Caco-2 (cell line): ENCODE measurements at regions of chr11 and their contacts with region 1.

Region 1: DNA sequence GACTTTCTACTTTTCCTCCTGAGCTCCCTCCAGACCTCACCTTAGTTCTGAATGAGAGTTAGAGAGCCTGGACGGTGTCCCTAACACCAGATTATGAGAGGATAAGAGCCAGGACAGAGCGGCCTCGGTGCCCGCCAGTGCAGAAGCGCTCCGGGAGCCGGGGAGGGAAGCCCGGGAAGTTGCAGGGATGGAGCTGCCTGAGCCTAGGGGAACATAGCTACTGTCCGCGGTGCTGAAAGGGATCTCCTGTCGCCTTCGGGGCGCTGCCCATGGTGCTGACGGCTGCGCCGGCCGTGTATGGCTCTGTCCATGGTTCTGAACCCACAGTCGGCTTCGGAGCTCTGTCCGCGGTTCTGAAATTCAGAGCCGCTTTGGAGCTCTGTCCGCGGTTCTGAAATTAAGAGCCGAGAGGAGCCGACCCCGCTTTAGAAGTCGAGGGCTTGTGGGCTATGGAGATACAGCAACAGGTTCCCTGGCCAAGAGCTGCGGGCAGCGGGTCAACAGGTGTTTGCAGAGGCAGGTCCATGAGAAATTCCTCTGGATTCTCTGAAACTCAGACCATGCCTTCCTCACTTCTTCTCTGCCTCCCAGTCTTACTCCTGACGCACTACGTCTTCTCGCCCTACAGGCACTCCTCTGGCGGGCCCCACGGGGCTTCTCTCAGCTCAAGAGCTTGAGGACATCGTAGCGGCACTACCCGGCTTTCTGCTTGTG is 814 bp downstream of the NPAS4 start:
- DNase-seq: peak; percentile 92 to 96
- H3K4me3 ChIP-seq: no peak overlapping the region
- H3K4me3 Mint-ChIP-seq: no peak overlapping the region
- H3K27ac Mint-ChIP-seq: no peak overlapping the region
- H3K4me1 ChIP-seq: no peaks in the 10 kb centered on the region
- H3K4me1 Mint-ChIP-seq: peaks cover 14% of the 10 kb centered on the region
- H3K27me3 ChIP-seq: no peaks in the 10 kb centered on the region; the same call in 1 of the 2 replicates
- H3K27me3 Mint-ChIP-seq: peaks cover 9% of the 10 kb centered on the region
- CTCF ChIP-seq: no peak

Region 2: GRCh38 chr11:66344550-66345315 is 76.9 kb before region 1 on chr11 and contains the start of gene BRMS1:
- CTCF ChIA-PET with region 1: no interaction called
- POLR2A ChIA-PET with region 1: no interaction called
- intact Hi-C with region 1: no loop called
- DNase-seq: peak; percentile 97 to 98
- H3K4me3 ChIP-seq: peak within 1 kb of the TSS; percentile 99
- H3K4me3 Mint-ChIP-seq: peak within 1 kb of the TSS; percentile 86
- H3K27ac Mint-ChIP-seq: peak within 1 kb of the TSS; percentile 99
- H3K4me1 ChIP-seq: peaks cover 22% of the 10 kb centered on the region
- H3K4me1 Mint-ChIP-seq: peaks cover 34% of the 10 kb centered on the region
- H3K27me3 ChIP-seq: no peaks in the 10 kb centered on the region
- H3K27me3 Mint-ChIP-seq: peaks cover 4% of the 10 kb centered on the region
- CTCF ChIP-seq: peak in 1 of 2 experiments; percentile 19
- total RNA-seq, gene BRMS1: 58.1 and 58.2 TPM in 2 replicates

Region 3: DNA sequence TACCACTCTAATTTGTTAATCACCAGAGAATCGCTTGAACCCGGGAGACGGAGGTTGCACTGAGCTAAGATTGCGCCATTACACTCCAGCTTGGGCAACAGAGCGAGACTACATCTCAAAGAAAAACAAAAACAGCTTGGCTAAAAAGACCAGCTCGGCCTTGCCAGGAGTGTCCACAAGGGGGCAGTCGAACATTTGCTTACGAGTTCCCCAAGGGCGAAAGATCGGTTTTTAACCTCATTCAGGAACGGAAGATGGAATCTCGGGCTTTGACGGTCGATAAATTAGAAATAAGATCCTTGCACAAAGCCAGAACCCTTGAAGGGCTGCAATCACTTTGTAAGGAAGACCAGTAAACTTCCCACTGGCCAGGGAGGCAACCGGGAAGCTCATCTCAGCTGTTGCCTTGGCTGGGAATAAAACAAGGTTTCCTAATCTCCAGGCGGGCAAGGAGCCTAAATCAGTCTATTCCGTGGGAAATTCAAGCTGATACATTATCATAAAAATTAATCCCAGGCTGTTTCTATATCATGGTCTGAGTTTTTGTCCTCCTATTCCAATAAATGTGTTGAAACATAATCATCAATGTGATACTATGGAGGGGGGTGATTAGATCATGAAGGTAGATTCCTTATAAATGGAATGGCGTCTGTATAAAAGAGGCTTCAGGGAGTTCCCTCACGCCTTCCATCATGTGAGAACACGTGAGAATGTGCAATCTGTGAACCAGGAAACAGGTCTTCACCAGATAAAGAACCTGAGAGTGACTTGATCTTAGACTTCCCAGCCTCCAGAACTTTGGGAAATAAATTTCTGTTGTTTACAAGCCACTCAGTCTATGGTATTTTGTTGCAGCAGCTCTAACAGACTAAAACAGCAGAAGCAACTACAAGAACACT is 35.2 kb before region 1 on chr11:
- CTCF ChIA-PET with region 1: interaction called, 10 read pairs
- POLR2A ChIA-PET with region 1: no interaction called
- intact Hi-C with region 1: no loop called
- DNase-seq: peak; percentile 85 to 86
- H3K4me3 ChIP-seq: no peak overlapping the region
- H3K4me3 Mint-ChIP-seq: peak overlapping the region; percentile 61
- H3K27ac Mint-ChIP-seq: no peak overlapping the region
- H3K4me1 ChIP-seq: no peaks in the 10 kb centered on the region
- H3K4me1 Mint-ChIP-seq: no peaks in the 10 kb centered on the region
- H3K27me3 ChIP-seq: no peaks in the 10 kb centered on the region
- H3K27me3 Mint-ChIP-seq: peaks cover 5% of the 10 kb centered on the region
- CTCF ChIP-seq: peak; percentile 86 to 94

Region 4: DNA sequence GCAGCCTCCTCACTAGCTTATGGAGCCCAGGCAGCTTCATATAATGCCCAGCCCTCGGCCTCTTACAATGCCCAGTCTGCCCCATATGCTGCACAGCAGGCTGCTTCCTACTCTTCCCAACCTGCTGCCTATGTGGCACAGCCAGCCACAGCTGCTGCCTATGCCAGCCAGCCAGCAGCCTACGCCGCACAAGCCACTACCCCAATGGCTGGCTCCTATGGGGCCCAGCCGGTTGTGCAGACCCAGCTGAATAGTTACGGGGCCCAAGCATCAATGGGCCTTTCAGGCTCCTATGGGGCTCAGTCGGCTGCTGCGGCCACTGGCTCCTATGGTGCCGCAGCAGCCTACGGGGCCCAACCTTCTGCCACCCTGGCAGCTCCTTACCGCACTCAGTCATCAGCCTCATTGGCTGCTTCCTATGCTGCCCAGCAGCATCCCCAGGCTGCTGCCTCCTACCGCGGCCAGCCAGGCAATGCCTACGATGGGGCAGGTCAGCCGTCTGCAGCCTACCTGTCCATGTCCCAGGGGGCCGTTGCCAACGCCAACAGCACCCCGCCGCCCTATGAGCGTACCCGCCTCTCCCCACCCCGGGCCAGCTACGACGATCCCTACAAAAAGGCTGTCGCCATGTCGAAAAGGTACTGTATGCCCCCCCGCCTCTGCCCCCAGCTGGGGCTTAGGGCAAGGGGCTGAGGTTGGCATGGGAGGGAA is 203.5 kb after region 1 on chr11:
- CTCF ChIA-PET with region 1: no interaction called
- POLR2A ChIA-PET with region 1: no interaction called
- intact Hi-C with region 1: no loop called
- DNase-seq: no peak
- H3K4me3 ChIP-seq: no peak overlapping the region
- H3K4me3 Mint-ChIP-seq: no peak overlapping the region
- H3K27ac Mint-ChIP-seq: no peak overlapping the region
- H3K4me1 ChIP-seq: no peaks in the 10 kb centered on the region
- H3K4me1 Mint-ChIP-seq: peaks cover under 1% of the 10 kb centered on the region
- H3K27me3 ChIP-seq: no peaks in the 10 kb centered on the region
- H3K27me3 Mint-ChIP-seq: no peaks in the 10 kb centered on the region
- CTCF ChIP-seq: no peak